ENCODE measurements at regions of chr14 and their contacts with region 1.

Region 1: DNA sequence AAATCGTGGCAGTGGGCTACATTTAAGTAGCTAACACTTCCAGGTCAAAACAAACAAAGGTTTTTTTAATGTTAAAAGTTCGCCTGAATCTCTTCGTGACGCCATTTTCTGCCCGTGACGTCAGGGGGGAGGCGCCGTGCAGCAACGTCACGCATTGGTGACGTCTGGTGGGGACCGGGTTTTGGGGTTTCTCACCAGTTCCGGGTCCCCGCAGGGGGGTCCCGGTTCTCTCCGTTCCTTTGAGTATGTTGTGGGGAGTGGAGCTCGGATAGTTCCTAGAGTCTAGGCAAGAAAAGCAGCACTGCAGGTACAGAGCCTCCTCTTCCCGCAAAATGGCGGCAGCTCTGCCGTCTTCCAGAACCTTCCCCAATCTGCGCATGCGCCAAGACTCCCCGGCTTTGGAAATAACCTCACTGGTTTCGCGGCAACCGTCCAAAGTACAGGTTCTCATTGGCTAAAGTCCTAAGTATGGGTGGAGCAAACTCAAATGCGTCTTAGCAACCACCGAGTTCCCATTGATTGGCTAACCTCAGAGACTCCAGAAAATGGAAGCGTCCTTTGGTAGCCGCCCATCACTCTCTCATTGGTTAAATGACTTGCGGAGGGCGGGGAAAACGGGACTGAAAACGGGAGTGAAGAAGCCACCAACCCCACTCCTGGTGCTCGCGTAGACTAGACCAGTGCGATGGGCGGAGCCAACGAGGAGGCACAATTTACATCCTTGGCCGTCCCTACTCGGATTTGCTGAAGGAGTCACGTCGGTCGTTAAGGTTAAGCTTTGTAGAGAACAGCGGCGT is at the start of gene RBM23:
- DNase-seq: peak; percentile 94
- ATAC-seq: peak; percentile 94
- H3K4me3 Mint-ChIP-seq: peak within 1 kb of the TSS; percentile 99
- H3K27ac Mint-ChIP-seq: peak within 1 kb of the TSS; percentile 100
- H3K4me1 Mint-ChIP-seq: peaks cover 53% of the 10 kb centered on the region
- H3K27me3 Mint-ChIP-seq: no peaks in the 10 kb centered on the region
- CTCF ChIP-seq: no peak
- total RNA-seq, gene RBM23: 130 and 131 TPM in 2 replicates

Region 2: DNA sequence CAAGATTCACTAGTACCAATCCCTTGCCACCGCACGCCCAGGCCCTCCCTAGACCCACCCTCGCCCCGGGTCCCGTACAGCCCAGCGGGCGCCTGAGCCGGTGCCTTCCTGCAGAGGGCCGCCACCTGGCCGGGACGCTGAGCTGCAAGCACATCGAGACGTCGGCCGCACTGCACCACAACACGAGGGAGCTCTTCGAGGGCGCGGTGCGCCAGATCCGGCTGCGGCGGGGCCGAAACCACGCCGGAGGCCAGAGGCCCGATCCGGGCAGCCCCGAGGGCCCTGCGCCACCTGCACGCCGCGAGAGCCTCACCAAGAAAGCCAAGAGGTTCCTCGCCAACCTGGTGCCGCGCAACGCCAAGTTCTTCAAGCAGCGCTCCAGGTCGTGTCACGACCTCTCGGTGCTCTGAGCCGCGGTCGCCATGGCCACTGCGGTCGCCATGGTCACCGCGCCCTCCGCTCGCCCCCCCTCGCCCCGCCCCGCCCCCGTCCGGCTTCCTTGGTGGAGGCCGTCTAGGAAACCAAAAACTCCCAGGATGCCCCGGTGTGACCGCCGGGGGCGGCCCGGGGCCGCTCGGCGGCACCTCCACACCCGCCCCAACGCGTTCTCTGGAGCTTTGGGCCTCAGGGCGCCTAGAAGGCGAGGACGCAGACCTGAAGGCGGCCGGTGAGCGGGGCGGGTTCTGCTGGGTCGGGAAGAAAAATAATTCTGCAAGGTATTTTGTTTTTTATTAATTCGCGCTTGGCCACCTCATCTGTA is 32.3 kb before region 1 on chr14:
- CTCF ChIA-PET with region 1: no interaction called
- POLR2A ChIA-PET with region 1: interaction called, 74 read pairs
- intact Hi-C with region 1: loop called (anchors 1 kb)
- DNase-seq: peak; percentile 71
- ATAC-seq: peak; percentile 55
- H3K4me3 Mint-ChIP-seq: peak overlapping the region; percentile 90
- H3K27ac Mint-ChIP-seq: peak overlapping the region; percentile 97
- H3K4me1 Mint-ChIP-seq: peaks cover 80% of the 10 kb centered on the region
- H3K27me3 Mint-ChIP-seq: no peaks in the 10 kb centered on the region
- CTCF ChIP-seq: no peak

Region 3: GRCh38 chr14:22929104-22929847 is 10.3 kb after region 1 on chr14 and contains the start of gene PRMT5:
- CTCF ChIA-PET with region 1: interaction called, 19 read pairs
- POLR2A ChIA-PET with region 1: interaction called, 47 read pairs
- intact Hi-C with region 1: loop called (anchors 1 kb)
- DNase-seq: peak; percentile 83
- ATAC-seq: peak; percentile 93
- H3K4me3 Mint-ChIP-seq: no peak within 1 kb of the TSS
- H3K27ac Mint-ChIP-seq: no peak within 1 kb of the TSS
- H3K4me1 Mint-ChIP-seq: peaks cover 14% of the 10 kb centered on the region
- H3K27me3 Mint-ChIP-seq: no peaks in the 10 kb centered on the region
- CTCF ChIP-seq: no peak
- total RNA-seq, gene PRMT5: 75.3 and 96.5 TPM in 2 replicates

Region 4: GRCh38 chr14:22955702-22956569 is 36.9 kb after region 1 on chr14:
- CTCF ChIA-PET with region 1: no interaction called
- POLR2A ChIA-PET with region 1: interaction called, 17 read pairs
- intact Hi-C with region 1: loop called (anchors 1 kb)
- DNase-seq: no peak
- ATAC-seq: no peak
- H3K4me3 Mint-ChIP-seq: peak overlapping the region; percentile 90
- H3K27ac Mint-ChIP-seq: peak overlapping the region; percentile 86
- H3K4me1 Mint-ChIP-seq: peaks cover 13% of the 10 kb centered on the region
- H3K27me3 Mint-ChIP-seq: no peaks in the 10 kb centered on the region
- CTCF ChIP-seq: no peak

Region 5: DNA sequence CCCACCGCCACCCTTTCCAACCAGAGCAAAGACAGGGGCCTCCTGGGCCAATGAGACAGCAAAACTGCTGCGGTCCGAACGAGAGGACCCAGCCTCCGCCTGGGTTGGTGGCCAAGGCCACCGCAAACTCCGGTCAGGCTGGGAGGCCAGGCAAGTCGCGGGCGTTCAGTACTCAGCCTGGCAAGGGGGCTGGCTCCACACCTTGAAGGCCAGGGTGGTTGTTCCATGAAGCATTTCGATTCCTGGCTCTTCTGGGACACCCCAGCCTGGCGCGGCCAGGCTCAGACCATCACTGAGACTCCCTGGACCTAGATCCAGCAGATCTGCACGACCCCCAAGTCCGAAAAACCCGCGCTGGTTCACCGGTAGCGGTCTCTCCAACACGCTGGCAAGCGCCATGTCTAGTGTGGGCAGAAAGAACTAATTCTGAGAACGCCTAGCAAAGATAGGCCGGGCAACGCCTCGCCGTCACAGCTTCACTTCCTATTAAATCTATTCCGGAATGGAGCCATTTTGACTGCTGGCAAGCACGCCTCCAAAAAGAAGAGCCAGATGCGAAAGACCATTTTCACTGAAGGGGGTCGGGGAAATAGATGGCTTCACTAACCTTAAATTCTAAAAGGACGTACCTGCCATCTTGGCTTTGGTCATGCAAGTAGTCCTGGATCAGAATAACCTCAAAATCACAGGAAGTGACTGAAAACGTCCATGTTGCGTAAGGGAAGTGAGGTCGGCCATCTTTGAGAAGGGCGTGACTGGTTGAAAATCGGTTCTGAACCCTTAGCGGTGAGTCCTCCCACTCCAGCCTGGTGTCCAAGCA is 115.7 kb after region 1 on chr14 and contains the start of gene PSMB5:
- CTCF ChIA-PET with region 1: no interaction called
- POLR2A ChIA-PET with region 1: no interaction called
- intact Hi-C with region 1: loop called (anchors 1 kb)
- DNase-seq: peak; percentile 67
- ATAC-seq: peak; percentile 93
- H3K4me3 Mint-ChIP-seq: peak within 1 kb of the TSS; percentile 84
- H3K27ac Mint-ChIP-seq: peak within 1 kb of the TSS; percentile 96
- H3K4me1 Mint-ChIP-seq: peaks cover 29% of the 10 kb centered on the region
- H3K27me3 Mint-ChIP-seq: no peaks in the 10 kb centered on the region
- CTCF ChIP-seq: no peak
- total RNA-seq, gene PSMB5: 53.3 and 67.5 TPM in 2 replicates